Right lobe of liver (tissue), 6 donors: ENCODE measurements at regions of chr2 and their contacts with region 1.

Region 1: GRCh38 chr2:159124441-159124911 is 156.0 kb downstream of the TANC1 start:
- DNase-seq: no peak
- ATAC-seq: peak; percentile 45 to 80 (median 62)
- H3K4me3 ChIP-seq: no peak overlapping the region
- H3K27ac ChIP-seq: no peak overlapping the region
- H3K4me1 ChIP-seq: no peaks in the 10 kb centered on the region
- H3K27me3 ChIP-seq: no peaks in the 10 kb centered on the region
- CTCF ChIP-seq: no peak
- POLR2A ChIP-seq: no peak

Region 2: GRCh38 chr2:158893026-158893425 is 231.4 kb before region 1 on chr2:
- intact Hi-C with region 1: loop called in 1 of 2 experiments (anchors 5 kb)
- DNase-seq: no peak
- ATAC-seq: peak in 1 of 4 donors; percentile 12
- H3K4me3 ChIP-seq: no peak overlapping the region
- H3K27ac ChIP-seq: no peak overlapping the region
- H3K4me1 ChIP-seq: no peaks in the 10 kb centered on the region
- H3K27me3 ChIP-seq: no peaks in the 10 kb centered on the region
- CTCF ChIP-seq: no peak
- POLR2A ChIP-seq: no peak

Region 3: GRCh38 chr2:158926478-158926948 is 198.0 kb before region 1 on chr2:
- intact Hi-C with region 1: no loop called
- DNase-seq: no peak
- ATAC-seq: no peak
- H3K4me3 ChIP-seq: no peak overlapping the region
- H3K27ac ChIP-seq: no peak overlapping the region
- H3K4me1 ChIP-seq: no peaks in the 10 kb centered on the region
- H3K27me3 ChIP-seq: no peaks in the 10 kb centered on the region
- CTCF ChIP-seq: no peak
- POLR2A ChIP-seq: no peak